Naive thymus-derived CD4-positive, alpha-beta T cell (primary cell): ENCODE measurements at regions of chr13 and their contacts with region 1.

Region 1: GRCh38 chr13:100588331-100589177 is at the start of gene GGACT:
- DNase-seq: peak; percentile 75 to 90 (median 87)
- ATAC-seq: peak; percentile 97
- H3K4me3 ChIP-seq: peak within 1 kb of the TSS; percentile 78
- H3K4me3 Mint-ChIP-seq: peak within 1 kb of the TSS; percentile 82 to 92 (median 85)
- H3K27ac ChIP-seq: peak within 1 kb of the TSS; percentile 79
- H3K27ac Mint-ChIP-seq: peak within 1 kb of the TSS; percentile 81 to 95 (median 92)
- H3K4me1 ChIP-seq: peaks cover 7 to 42% of the 10 kb centered on the region in 2 donors
- H3K4me1 Mint-ChIP-seq: peaks cover 28 to 60% (median 50%) of the 10 kb centered on the region in 7 donors
- H3K27me3 ChIP-seq: no peaks in the 10 kb centered on the region
- H3K27me3 Mint-ChIP-seq: no peaks in the 10 kb centered on the region
- total RNA-seq, gene GGACT: 5.3 to 8.7 (median 7.4) TPM

Region 2: DNA sequence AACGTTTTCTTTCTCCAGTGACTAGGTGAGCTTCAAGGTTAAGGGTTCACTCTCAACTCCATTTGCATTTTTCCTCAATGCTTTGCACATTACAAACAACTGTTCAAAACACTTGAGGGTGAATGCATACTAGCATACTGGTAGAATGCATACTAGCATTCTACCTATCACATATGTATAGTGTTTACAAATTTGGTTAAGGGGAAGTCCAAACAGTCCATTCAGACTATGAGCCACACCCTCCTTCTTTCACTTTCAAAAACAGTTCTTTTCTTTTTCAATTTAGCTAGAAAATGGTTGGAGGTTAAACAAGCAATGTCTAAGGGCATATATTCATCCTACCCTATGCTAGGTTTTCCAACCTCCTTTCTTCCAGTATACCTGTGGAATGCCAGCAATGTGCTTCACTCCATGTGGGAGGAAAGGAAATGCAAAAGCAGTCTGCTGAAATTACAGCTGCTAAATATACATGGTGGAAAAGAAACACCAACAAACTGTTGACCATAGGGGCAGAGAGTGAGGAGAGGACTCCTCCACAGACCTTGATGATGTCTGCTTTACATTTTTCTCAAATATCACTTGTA is 1713.3 kb before region 1 on chr13:
- CTCF ChIA-PET with region 1: no interaction called
- POLR2A ChIA-PET with region 1: no interaction called
- intact Hi-C with region 1: loop called in 1 of 2 experiments (anchors 5 kb)
- DNase-seq: no peak
- ATAC-seq: peak; percentile 56
- H3K4me3 ChIP-seq: no peak overlapping the region
- H3K4me3 Mint-ChIP-seq: peak overlapping the region in 1 of 10 donors; percentile 82
- H3K27ac ChIP-seq: no peak overlapping the region
- H3K27ac Mint-ChIP-seq: peak overlapping the region in 4 of 9 donors; percentile 22 to 95 (median 36)
- H3K4me1 ChIP-seq: no peaks in the 10 kb centered on the region
- H3K4me1 Mint-ChIP-seq: peaks cover 5 to 54% (median 23%) of the 10 kb centered on the region in 7 donors
- H3K27me3 ChIP-seq: no peaks in the 10 kb centered on the region
- H3K27me3 Mint-ChIP-seq: no peaks in the 10 kb centered on the region

Region 3: DNA sequence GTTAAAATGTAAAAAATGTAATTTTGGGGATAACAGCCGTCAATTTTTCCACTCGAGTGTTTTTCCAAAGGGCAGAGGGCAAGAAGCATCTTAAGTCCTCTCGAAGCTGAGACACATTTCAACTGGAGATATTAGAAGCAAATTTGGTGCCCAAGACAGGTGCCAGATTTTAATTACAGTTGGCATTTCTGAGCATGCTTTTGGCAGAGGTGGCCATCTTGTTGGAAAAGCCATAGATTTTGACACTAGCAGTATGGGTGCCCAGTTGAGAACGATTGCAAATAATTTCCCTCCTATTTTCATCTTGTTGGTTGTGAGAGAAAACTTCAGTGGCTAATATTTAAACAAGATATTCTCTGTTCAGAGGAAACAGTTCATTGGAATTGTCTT is 941.0 kb before region 1 on chr13:
- CTCF ChIA-PET with region 1: no interaction called
- POLR2A ChIA-PET with region 1: no interaction called
- intact Hi-C with region 1: no loop called
- DNase-seq: no peak
- ATAC-seq: no peak
- H3K4me3 ChIP-seq: no peak overlapping the region
- H3K4me3 Mint-ChIP-seq: no peak overlapping the region
- H3K27ac ChIP-seq: no peak overlapping the region
- H3K27ac Mint-ChIP-seq: peak overlapping the region in 1 of 9 donors; percentile 9
- H3K4me1 ChIP-seq: no peaks in the 10 kb centered on the region
- H3K4me1 Mint-ChIP-seq: peaks cover 0 to 19% (median 0%) of the 10 kb centered on the region in 7 donors
- H3K27me3 ChIP-seq: no peaks in the 10 kb centered on the region
- H3K27me3 Mint-ChIP-seq: peaks cover 0 to 2% (median 0%) of the 10 kb centered on the region in 5 donors

Region 4: DNA sequence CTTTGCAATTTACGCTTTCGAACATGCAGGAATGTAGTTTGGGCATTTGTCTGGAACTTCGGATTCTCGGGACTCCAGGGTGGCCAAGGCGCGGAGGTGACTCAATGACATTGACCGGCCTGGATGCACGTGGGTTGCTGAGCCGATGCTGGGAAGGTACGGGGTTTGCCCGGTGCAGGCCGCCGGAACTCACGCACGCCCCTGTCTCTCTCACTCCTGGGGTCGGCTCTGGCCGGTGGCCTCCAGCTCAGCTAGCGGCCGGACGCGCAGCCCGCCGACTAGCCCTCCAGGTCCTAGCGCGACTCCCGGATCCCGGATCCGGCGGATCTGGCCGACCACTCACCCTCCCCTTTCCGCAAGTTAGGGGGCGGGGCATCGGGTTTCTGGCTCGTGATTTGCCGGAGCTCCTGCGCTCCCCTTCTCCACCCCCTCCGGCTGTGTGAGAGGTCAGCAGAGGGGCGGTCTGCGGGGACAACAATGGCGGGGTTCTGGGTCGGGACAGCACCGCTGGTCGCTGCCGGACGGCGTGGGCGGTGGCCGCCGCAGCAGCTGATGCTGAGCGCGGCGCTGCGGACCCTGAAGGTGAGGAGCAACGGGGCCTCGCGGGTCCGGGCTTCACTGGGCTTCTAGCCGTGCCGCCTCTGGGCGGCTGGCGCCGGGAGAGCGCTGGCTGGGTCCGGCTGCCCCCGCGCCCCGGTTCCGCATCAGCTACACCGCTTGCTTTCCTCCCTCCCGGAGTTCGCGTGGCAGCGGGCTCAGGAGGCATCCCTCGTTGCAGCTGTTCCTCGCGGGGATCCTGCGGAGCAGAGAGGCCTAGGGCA is 499.7 kb before region 1 on chr13 and contains the start of gene PCCA:
- CTCF ChIA-PET with region 1: no interaction called
- POLR2A ChIA-PET with region 1: no interaction called
- intact Hi-C with region 1: loop called in 1 of 2 experiments (anchors 2 kb)
- DNase-seq: peak; percentile 43 to 86 (median 51)
- ATAC-seq: peak; percentile 87
- H3K4me3 ChIP-seq: peak within 1 kb of the TSS; percentile 77
- H3K4me3 Mint-ChIP-seq: peak within 1 kb of the TSS; percentile 90 to 99 (median 95)
- H3K27ac ChIP-seq: peak within 1 kb of the TSS; percentile 58
- H3K27ac Mint-ChIP-seq: peak within 1 kb of the TSS; percentile 44 to 96 (median 79)
- H3K4me1 ChIP-seq: peaks cover 0 to 19% of the 10 kb centered on the region in 2 donors
- H3K4me1 Mint-ChIP-seq: peaks cover 22 to 41% (median 27%) of the 10 kb centered on the region in 7 donors
- H3K27me3 ChIP-seq: no peaks in the 10 kb centered on the region
- H3K27me3 Mint-ChIP-seq: peaks cover 0 to 5% (median 0%) of the 10 kb centered on the region in 5 donors
- total RNA-seq, gene PCCA: 8.3 to 14.6 (median 12.0) TPM

Region 5: GRCh38 chr13:100608906-100609305 is 20.4 kb after region 1 on chr13:
- CTCF ChIA-PET with region 1: no interaction called
- POLR2A ChIA-PET with region 1: no interaction called
- intact Hi-C with region 1: loop called in 1 of 2 experiments (anchors 2 kb)
- DNase-seq: no peak
- ATAC-seq: peak; percentile 82
- H3K4me3 ChIP-seq: no peak overlapping the region
- H3K4me3 Mint-ChIP-seq: peak overlapping the region in 1 of 10 donors; percentile 58
- H3K27ac ChIP-seq: no peak overlapping the region
- H3K27ac Mint-ChIP-seq: peak overlapping the region in 3 of 9 donors; percentile 45 to 89 (median 54)
- H3K4me1 ChIP-seq: no peaks in the 10 kb centered on the region
- H3K4me1 Mint-ChIP-seq: peaks cover 0 to 36% (median 5%) of the 10 kb centered on the region in 7 donors
- H3K27me3 ChIP-seq: no peaks in the 10 kb centered on the region
- H3K27me3 Mint-ChIP-seq: no peaks in the 10 kb centered on the region

Region 6: GRCh38 chr13:101127741-101128353 is 539.3 kb after region 1 on chr13:
- CTCF ChIA-PET with region 1: no interaction called
- POLR2A ChIA-PET with region 1: no interaction called
- intact Hi-C with region 1: loop called in 1 of 2 experiments (anchors 5 kb)
- DNase-seq: peak in 5 of 9 donors; percentile 16 to 36 (median 29)
- ATAC-seq: peak; percentile 80
- H3K4me3 ChIP-seq: no peak overlapping the region
- H3K4me3 Mint-ChIP-seq: no peak overlapping the region
- H3K27ac ChIP-seq: no peak overlapping the region
- H3K27ac Mint-ChIP-seq: no peak overlapping the region
- H3K4me1 ChIP-seq: no peaks in the 10 kb centered on the region
- H3K4me1 Mint-ChIP-seq: peaks cover 0 to 5% (median 0%) of the 10 kb centered on the region in 7 donors
- H3K27me3 ChIP-seq: peaks cover 0 to 2% of the 10 kb centered on the region in 2 donors
- H3K27me3 Mint-ChIP-seq: peaks cover 0 to 20% (median 15%) of the 10 kb centered on the region in 5 donors

Region 7: GRCh38 chr13:102394158-102395053 is 1805.9 kb after region 1 on chr13:
- CTCF ChIA-PET with region 1: no interaction called
- POLR2A ChIA-PET with region 1: no interaction called
- intact Hi-C with region 1: loop called in 1 of 2 experiments (anchors 10 kb)
- DNase-seq: peak; percentile 91 to 98 (median 95)
- ATAC-seq: peak; percentile 94
- H3K4me3 ChIP-seq: peak overlapping the region; percentile 96
- H3K4me3 Mint-ChIP-seq: peak overlapping the region; percentile 85 to 93 (median 90)
- H3K27ac ChIP-seq: peak overlapping the region; percentile 78
- H3K27ac Mint-ChIP-seq: peak overlapping the region in 8 of 9 donors; percentile 82 to 94 (median 88)
- H3K4me1 ChIP-seq: peaks cover 0 to 12% of the 10 kb centered on the region in 2 donors
- H3K4me1 Mint-ChIP-seq: peaks cover 6 to 25% (median 20%) of the 10 kb centered on the region in 7 donors
- H3K27me3 ChIP-seq: no peaks in the 10 kb centered on the region
- H3K27me3 Mint-ChIP-seq: peaks cover 13 to 41% (median 22%) of the 10 kb centered on the region in 5 donors